ENCODE measurements at regions of chr5 and their contacts with region 1.

Region 1: GRCh38 chr5:55691265-55692105 is 20.6 kb downstream of the SLC38A9 start:
- DNase-seq: peak; percentile 56
- H3K4me3 Mint-ChIP-seq: no peak overlapping the region
- H3K27ac Mint-ChIP-seq: no peak overlapping the region
- H3K4me1 Mint-ChIP-seq: no peaks in the 10 kb centered on the region
- H3K27me3 Mint-ChIP-seq: no peaks in the 10 kb centered on the region
- CTCF ChIP-seq: peak; percentile 61

Region 2: DNA sequence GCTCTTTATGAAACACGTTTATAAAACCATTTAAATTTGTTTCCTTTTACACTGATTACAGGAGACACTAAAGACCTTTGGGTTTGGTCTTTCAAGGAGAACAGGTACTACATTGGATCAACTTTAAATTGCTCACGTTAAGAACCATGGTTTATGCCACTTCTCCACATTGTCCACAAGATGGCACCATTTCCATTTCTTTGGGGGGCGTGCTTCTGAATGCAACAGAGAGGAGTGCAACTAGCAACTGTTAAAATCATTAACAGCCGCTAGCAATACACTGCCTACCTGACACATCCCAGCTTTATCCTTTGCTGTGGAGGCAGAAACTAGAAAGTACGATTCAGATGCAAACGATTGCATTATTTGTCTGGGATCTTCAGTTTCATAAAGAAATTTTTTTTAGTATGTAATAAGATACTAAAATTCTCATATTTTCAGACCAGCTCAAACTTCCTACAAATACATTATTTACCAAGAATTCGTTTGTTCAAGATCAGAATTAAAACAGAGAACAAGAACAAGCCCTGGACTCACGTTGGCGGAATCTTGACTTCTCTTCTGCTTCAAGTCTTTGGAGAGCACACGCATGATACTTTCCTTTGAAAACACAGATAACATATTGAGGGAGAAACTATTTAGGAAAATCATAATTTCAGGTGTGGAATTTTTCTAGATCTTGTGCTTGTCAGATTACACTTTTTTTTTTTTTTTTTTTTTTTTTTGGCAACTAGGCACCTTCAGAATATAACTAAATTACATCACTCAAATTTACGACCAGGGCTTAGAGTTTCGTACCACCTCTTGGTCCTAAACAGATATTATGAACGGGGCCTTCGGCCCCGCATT is 519.2 kb before region 1 on chr5:
- CTCF ChIA-PET with region 1: interaction called, 3 read pairs
- POLR2A ChIA-PET with region 1: no interaction called
- intact Hi-C with region 1: loop called (anchors 1 kb)
- DNase-seq: peak; percentile 96
- H3K4me3 Mint-ChIP-seq: peak overlapping the region; percentile 83
- H3K27ac Mint-ChIP-seq: peak overlapping the region; percentile 25
- H3K4me1 Mint-ChIP-seq: peaks cover 16% of the 10 kb centered on the region
- H3K27me3 Mint-ChIP-seq: no peaks in the 10 kb centered on the region
- CTCF ChIP-seq: peak; percentile 69

Region 3: DNA sequence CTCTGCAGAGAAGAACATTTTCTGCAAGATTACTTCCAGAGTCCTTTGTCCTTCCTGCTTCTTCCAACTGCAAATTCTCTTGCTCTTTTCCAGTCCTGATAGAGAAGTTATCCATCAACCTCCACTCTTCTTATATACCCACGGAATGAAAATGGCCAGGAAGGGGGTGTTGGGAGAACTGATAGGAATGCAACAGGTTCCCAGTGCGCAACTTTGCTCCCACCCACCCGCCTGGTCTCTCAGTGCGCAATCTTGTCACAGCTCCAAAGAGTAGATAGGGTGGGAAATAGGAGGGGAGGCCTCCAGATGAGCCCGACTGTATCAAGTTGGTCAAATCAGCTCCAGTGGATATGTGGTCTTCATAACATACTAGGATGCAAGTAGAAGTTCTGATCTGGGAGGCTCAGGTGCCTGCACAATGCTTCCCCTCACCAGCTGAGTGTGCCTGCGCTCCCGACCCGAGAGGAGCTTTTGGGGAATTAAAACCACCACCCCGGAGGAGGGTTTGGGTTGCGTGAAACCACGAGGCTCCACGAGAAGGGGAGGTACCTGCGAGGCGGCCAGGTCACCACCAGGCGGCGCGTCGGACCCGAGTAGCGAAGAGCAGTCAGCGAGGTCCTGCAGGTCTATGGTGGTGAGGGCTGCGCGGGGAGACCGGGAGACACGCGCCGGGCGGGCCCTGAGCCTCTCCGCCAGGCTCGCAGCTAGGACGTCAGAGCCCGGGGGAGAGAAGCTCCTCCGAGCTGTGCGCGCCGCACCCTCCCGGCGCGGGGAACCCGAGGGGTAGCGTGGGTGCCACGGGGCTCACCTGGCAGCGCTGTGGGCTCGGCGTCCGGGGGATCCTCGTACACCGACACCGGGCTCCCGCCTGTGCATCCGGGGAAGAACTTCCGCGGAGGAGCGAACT is 465.2 kb before region 1 on chr5:
- CTCF ChIA-PET with region 1: no interaction called
- POLR2A ChIA-PET with region 1: no interaction called
- intact Hi-C with region 1: loop called (anchors 1 kb)
- DNase-seq: peak; percentile 84
- H3K4me3 Mint-ChIP-seq: peak overlapping the region; percentile 74
- H3K27ac Mint-ChIP-seq: no peak overlapping the region
- H3K4me1 Mint-ChIP-seq: no peaks in the 10 kb centered on the region
- H3K27me3 Mint-ChIP-seq: no peaks in the 10 kb centered on the region
- CTCF ChIP-seq: peak; percentile 88

Region 4: DNA sequence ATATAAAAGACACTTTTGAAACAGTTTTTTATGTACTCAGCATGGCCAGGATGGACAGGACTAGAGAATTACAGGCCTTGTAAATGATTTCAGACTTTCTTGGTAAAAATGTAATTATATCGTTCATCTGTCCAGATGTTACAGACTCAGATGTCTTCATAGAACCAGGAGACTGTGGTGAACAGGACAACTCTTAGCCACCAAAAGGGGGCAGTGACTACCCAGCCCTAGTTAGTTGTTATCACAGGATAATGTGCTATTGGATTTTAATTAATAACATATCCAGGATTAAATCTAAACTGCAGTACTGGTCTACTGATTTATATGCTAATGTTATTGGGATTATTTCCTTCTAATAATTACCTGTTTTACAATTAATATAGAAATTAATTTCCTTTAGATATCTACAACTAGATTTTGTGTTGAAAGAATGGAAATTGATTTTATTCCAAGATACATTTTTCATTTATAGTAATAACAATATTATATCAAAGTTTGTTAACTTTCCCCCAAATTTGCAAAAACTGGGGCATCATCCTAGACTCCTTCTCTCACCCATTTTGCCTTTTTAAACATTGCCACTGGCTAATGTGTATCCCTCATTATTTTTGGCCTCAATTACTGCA is 284.3 kb before region 1 on chr5:
- CTCF ChIA-PET with region 1: interaction called, 20 read pairs
- POLR2A ChIA-PET with region 1: interaction called, 3 read pairs
- intact Hi-C with region 1: loop called (anchors 1 kb)
- DNase-seq: peak; percentile 54
- H3K4me3 Mint-ChIP-seq: no peak overlapping the region
- H3K27ac Mint-ChIP-seq: peak overlapping the region; percentile 53
- H3K4me1 Mint-ChIP-seq: no peaks in the 10 kb centered on the region
- H3K27me3 Mint-ChIP-seq: no peaks in the 10 kb centered on the region
- CTCF ChIP-seq: peak; percentile 59

Region 5: GRCh38 chr5:55923177-55923771 is 231.8 kb after region 1 on chr5:
- CTCF ChIA-PET with region 1: no interaction called
- POLR2A ChIA-PET with region 1: no interaction called
- intact Hi-C with region 1: loop called (anchors 5 kb)
- DNase-seq: no peak
- H3K4me3 Mint-ChIP-seq: no peak overlapping the region
- H3K27ac Mint-ChIP-seq: no peak overlapping the region
- H3K4me1 Mint-ChIP-seq: no peaks in the 10 kb centered on the region
- H3K27me3 Mint-ChIP-seq: no peaks in the 10 kb centered on the region
- CTCF ChIP-seq: no peak